Motor neuron (in vitro differentiated cells): ENCODE measurements at regions of chr15 and their contacts with region 1.

Region 1: GRCh38 chr15:35289024-35289617 is 204.0 kb upstream of the NANOGP8 start:
- ATAC-seq: peak; percentile 67 to 88 (median 78)
- H3K4me3 ChIP-seq: no peak overlapping the region
- H3K27ac ChIP-seq: no peak overlapping the region
- H3K4me1 ChIP-seq: peaks cover 10 to 38% of the 10 kb centered on the region in 2 donors

Region 2: GRCh38 chr15:34953851-34954250 is 335.3 kb before region 1 on chr15:
- in situ Hi-C with region 1: no loop called
- ATAC-seq: no peak
- H3K4me3 ChIP-seq: no peak overlapping the region
- H3K27ac ChIP-seq: no peak overlapping the region
- H3K4me1 ChIP-seq: no peaks in the 10 kb centered on the region

Region 3: DNA sequence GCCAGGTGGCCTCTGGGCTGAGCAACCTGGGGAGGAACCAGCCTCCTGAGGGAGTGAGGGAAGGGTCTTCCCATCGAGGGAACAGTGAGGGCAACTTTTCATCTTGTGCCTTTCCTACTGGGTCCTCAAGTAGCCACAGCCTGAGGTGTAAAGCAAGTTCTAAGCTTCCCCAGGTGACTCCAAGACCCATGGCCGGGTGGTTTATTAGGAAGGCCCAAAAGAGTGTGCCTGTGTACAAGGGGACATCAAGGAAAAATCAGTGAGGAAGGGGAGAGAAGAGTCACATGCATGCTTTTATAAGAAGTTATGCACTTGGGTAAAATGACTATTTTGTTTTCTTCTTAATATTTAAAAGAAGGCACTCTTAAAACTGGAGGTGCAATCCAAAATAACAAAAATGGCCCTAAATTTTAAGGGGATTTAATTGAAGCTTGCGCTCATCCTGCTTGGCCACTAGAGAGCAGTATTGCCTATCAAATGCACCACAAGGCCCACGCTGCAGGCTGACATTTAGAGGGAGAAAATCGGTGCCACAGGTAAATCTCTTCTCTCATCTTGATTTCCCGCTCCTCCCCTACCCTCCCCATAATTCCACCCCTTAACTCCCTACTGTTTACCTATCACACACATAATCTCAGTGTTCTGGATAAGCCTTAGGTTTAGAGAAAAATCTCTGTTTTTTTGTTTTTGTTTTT is 210.8 kb before region 1 on chr15:
- in situ Hi-C with region 1: loop called in 2 of 9 experiments (anchors 25 kb)
- ATAC-seq: peak in 6 of 8 experiments; percentile 33 to 70 (median 46)
- H3K4me3 ChIP-seq: no peak overlapping the region
- H3K27ac ChIP-seq: no peak overlapping the region
- H3K4me1 ChIP-seq: no peaks in the 10 kb centered on the region

Region 4: DNA sequence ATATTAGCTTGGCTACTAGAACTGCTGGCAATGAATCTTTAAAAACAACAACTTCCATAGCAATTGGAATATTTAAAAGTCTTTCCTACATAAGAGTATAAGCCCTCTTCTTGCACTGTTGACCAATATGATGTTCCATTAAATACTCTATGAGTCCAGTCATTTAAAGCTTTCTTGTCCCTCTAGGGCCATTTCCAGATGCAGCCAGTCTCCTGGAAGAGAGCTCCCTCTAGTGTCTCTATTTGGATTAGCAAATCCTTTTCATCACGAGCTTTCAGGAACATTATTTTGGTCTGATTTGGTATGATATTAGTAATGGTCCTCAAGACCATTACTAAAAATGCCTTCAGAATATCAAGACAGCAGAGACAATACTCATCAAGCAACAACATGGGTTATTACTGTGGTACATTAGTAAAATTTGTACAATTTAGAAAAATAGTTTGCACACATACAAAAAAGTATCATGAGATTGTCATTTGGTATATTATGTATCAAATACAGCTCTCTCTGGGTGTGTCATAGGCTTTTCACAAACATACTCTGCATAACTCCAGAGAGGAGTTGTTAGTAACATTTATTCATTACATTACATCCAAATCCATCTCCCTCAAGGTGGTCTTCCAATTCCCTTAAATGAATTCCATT is 155.6 kb after region 1 on chr15:
- in situ Hi-C with region 1: loop called in 2 of 9 experiments (anchors 10 to 25 kb)
- ATAC-seq: peak in 2 of 8 experiments; percentile 46 to 51
- H3K4me3 ChIP-seq: no peak overlapping the region
- H3K27ac ChIP-seq: no peak overlapping the region
- H3K4me1 ChIP-seq: no peaks in the 10 kb centered on the region